Dorsolateral prefrontal cortex (tissue), 120 donors: ENCODE measurements at regions of chrX and their contacts with region 1.

Region 1: DNA sequence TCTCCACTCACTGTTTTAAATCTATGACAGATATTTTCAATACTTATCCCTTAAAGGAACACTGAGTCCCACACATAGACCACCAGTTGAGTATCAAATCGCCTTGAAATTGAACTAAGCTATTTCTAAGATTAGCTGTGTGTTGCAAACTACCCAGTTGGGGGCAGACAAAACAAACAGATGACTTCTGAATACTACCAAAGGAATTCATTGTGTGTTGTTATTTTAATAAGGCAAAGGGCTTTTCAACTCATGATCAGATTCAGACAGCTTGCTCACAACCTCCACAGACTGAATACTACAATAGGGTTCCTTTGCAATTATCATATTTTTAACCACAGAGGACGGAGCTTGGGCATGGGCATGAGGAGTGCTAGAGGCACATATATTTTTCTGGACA is 283.0 kb upstream of the GPC4 start:
- DNase-seq: no peak
- H3K4me3 ChIP-seq: no peak overlapping the region
- H3K27ac ChIP-seq: no peak overlapping the region
- H3K27me3 ChIP-seq: peaks cover 0 to 85% (median 20%) of the 10 kb centered on the region in 45 donors
- CTCF ChIP-seq: peak in 47 of 56 donors; percentile 14 to 68 (median 36)

Region 2: GRCh38 chrX:133776072-133776471 is 77.8 kb after region 1 on chrX:
- intact Hi-C with region 1: loop called in 1 of 2 experiments (anchors 5 kb)
- DNase-seq: peak in 3 of 10 donors; percentile 21 to 47 (median 21)
- H3K4me3 ChIP-seq: no peak overlapping the region
- H3K27ac ChIP-seq: no peak overlapping the region
- H3K27me3 ChIP-seq: peaks cover 0 to 68% (median 12%) of the 10 kb centered on the region in 45 donors
- CTCF ChIP-seq: peak in 54 of 56 donors; percentile 29 to 70 (median 52)

Region 3: DNA sequence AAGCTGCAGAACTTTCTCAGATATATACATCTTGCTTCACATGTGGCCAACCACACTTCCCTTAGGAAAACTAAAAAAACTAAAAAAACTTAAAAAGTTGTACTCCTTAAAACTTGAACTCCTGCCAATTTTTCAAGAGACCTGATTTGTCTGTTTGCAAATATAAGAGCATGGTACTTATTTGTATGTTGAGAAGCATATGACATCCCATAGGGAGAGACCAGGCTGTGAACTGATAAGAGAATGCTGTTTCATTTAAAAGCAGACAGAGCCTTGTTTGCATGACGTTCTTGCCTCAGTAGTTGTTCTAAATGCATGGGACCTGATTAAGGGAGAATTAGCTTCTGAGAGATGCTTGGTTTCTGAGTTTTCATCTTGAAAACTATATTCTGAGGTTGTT is 117.2 kb after region 1 on chrX:
- intact Hi-C with region 1: no loop called
- DNase-seq: no peak
- H3K4me3 ChIP-seq: no peak overlapping the region
- H3K27ac ChIP-seq: no peak overlapping the region
- H3K27me3 ChIP-seq: peaks cover 0 to 72% (median 28%) of the 10 kb centered on the region in 45 donors
- CTCF ChIP-seq: no peak

Region 4: GRCh38 chrX:134406356-134407064 is 708.2 kb after region 1 on chrX:
- intact Hi-C with region 1: loop called in 1 of 2 experiments (anchors 10 kb)
- DNase-seq: no peak
- H3K4me3 ChIP-seq: no peak overlapping the region
- H3K27ac ChIP-seq: peak overlapping the region in 3 of 59 donors; percentile 3 to 26 (median 7)
- H3K27me3 ChIP-seq: peaks cover 0 to 41% (median 0%) of the 10 kb centered on the region in 45 donors
- CTCF ChIP-seq: no peak